Ascending aorta (tissue), 2 donors: ENCODE measurements at regions of chrX and their contacts with region 1.

Region 1: GRCh38 chrX:45769761-45770582 is 569.3 kb upstream of the DIPK2B start:
- DNase-seq: peak; percentile 55 to 86
- H3K4me3 ChIP-seq: peak overlapping the region; percentile 46 to 61
- H3K27ac ChIP-seq: peak overlapping the region; percentile 76 to 77
- H3K4me1 ChIP-seq: no peaks in the 10 kb centered on the region
- H3K27me3 ChIP-seq: no peaks in the 10 kb centered on the region
- CTCF ChIP-seq: no peak

Region 2: DNA sequence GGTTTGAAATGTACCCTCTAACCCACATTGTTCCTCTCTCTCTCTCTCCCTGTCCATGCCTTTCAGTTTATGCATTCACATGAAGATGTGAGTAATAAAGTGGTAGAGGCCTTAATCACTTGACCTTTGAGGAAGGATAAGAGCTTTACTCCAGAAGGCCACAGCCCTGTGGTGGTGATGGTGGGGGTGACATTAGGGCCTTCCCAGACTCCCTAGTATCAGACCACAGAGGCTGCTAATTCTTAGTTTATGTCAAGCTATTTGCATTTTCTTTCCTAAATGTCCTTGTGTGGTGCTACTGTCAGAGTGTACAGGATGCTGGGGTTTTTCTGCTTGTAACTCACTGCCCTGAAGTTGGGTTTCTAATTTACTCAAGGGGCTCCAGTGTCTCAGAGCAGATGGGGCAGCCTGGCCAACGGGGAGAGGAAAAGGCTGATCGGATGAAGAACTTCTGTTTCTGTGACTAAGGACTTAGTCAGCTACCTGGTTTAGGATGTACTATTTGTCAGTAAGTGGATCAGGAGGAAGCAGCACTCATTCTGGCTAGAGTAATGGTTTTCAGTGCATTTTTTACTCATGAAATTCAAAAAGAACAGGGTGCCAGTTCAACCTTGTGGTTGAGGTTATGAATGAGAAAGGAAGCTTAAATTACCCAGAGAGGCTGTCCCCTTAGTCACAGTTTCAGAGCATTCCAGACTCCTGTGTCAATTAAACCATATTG is 59.7 kb before region 1 on chrX:
- intact Hi-C with region 1: loop called (anchors 5 kb)
- DNase-seq: no peak
- H3K4me3 ChIP-seq: no peak overlapping the region
- H3K27ac ChIP-seq: peak overlapping the region; percentile 26 to 54
- H3K4me1 ChIP-seq: peaks cover 0 to 3% of the 10 kb centered on the region in 2 donors
- H3K27me3 ChIP-seq: no peaks in the 10 kb centered on the region
- CTCF ChIP-seq: no peak

Region 3: DNA sequence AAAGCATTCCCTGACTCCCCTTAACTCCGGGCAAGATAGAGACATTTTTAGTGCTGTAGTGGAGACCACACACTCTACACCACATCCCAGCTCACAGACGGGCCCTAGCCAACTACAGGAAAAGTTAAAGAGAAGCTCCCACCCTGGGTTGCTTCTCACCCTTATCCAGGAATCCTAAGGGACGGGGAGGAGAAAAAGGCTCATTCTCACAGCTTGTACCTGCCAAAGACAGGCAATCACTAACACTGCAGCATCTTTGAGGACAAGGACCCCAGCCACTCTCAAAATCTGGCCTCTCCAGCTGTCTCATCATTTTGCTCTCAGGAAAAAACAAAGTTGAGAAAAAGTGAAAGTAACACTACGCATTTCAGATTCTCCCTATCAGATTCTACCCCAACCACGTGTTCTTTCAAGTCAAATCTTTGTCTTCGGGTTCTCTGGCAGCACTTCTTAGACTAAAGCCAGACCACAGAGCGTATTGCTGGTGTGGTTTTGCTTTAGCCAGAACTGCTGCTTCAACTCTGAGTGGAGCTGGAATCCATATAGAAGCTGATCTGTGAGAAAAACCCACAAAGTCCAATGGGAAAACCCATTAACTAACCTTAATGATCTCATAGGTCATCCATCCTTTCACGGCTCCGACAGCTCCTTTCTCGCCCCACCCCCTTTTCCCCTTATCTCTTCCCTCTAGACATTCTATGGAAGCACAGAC is 36.6 kb after region 1 on chrX:
- intact Hi-C with region 1: loop called (anchors 2 kb)
- DNase-seq: no peak
- H3K4me3 ChIP-seq: peak overlapping the region; percentile 38 to 59
- H3K27ac ChIP-seq: peak overlapping the region; percentile 62 to 67
- H3K4me1 ChIP-seq: no peaks in the 10 kb centered on the region
- H3K27me3 ChIP-seq: no peaks in the 10 kb centered on the region
- CTCF ChIP-seq: no peak